Activated naive CD8-positive, alpha-beta T cell treated with anti-CD3 and anti-CD28 coated beads, Interleukin-2, amount 10 ng/mL, durations not matched to agents 7 days and 5 days (primary cell): ENCODE measurements at regions of chr1 and their contacts with region 1.

Region 1: GRCh38 chr1:161071886-161072371 is 2.2 kb upstream of the ARHGAP30 start:
- DNase-seq: peak; percentile 62
- ATAC-seq: no peak
- H3K4me3 Mint-ChIP-seq: no peak overlapping the region
- H3K27ac Mint-ChIP-seq: peak overlapping the region; percentile 74
- H3K4me1 Mint-ChIP-seq: peaks cover 38% of the 10 kb centered on the region
- H3K27me3 Mint-ChIP-seq: no peaks in the 10 kb centered on the region

Region 2: DNA sequence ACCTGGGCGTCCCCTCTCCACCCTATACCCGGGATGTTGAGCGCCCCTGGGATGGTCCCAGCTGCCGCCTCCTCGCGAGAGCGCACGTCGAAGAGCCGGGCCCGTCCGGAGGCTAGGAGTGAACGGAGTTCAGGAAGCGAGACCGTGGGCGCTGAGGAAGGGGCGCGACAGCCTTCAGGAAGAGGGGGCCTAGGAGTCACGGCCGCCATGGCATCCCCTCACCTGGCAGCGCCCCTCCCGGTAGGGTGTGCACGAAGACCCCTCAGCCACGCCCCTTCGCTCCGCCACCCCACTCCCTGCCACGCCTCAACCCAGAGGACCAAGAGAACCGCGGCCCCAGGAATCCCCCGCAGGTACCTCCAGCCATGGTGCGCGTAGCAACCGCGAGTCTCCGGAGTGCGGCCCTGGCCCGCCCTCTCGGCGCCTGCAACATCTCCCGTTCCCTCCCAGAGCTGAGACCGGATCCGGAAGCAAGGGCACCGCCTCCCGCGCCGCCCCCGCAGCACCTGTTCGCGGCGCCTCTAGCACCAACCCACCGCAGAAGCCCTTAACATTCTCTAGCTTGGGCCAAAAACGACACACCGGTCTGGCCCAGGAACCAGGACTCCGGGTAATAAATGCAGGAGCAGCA is 33.3 kb before region 1 on chr1 and contains the start of gene TSTD1:
- POLR2A ChIA-PET with region 1: interaction called, 159 read pairs
- DNase-seq: peak; percentile 88
- ATAC-seq: peak; percentile 88
- H3K4me3 Mint-ChIP-seq: peak within 1 kb of the TSS; percentile 93
- H3K27ac Mint-ChIP-seq: peak within 1 kb of the TSS; percentile 90
- H3K4me1 Mint-ChIP-seq: peaks cover 32% of the 10 kb centered on the region
- H3K27me3 Mint-ChIP-seq: no peaks in the 10 kb centered on the region
- total RNA-seq, gene TSTD1: 81.7 to 84.9 TPM

Region 3: DNA sequence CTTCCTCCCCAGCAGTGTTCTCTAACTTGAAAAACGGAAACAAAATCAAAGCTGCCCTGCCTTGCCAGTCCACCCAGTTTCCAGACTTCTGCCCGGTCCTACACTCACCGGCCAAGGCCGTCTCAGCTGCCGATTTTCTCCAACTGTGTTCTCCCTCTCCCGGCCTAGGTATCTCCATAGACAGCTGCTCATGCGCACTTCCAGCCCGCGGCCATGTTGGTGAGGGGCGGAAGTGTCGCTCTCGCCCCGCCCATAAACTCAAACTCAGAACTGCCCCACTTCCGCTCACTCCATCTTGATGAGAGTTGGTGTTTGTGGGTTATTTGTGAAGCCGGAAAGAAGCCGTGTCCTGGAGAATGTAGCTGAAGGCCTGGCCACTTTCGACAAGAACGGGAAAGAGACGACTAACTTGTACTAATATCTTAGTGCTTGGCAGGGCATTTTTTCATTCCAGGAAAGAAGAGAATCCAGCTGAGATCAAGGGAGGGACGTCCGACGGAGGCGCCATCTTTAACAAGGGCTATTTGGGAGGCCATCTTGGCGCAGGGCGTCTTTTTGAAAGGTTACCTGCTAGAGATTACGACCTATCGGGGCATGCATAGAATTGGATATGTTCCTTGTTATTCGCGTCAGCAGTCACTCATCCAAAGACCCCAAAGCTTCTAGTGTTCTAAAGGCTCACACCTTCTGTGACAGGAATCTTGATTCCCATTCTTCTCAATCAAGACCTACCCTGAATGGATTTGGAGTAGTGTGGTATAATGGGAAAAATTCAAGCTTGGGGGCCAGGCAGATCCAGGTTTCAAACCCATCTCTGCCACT is 26.0 kb before region 1 on chr1 and contains the start of gene USF1:
- POLR2A ChIA-PET with region 1: interaction called, 159 read pairs
- DNase-seq: peak; percentile 93
- ATAC-seq: peak; percentile 73
- H3K4me3 Mint-ChIP-seq: peak within 1 kb of the TSS; percentile 93
- H3K27ac Mint-ChIP-seq: peak within 1 kb of the TSS; percentile 99
- H3K4me1 Mint-ChIP-seq: peaks cover 36% of the 10 kb centered on the region
- H3K27me3 Mint-ChIP-seq: no peaks in the 10 kb centered on the region
- total RNA-seq, gene USF1: 93.0 to 96.3 TPM

Region 4: GRCh38 chr1:161098210-161099068 is 26.5 kb after region 1 on chr1 and contains the start of gene KLHDC9:
- POLR2A ChIA-PET with region 1: interaction called, 118 read pairs
- DNase-seq: peak; percentile 82
- ATAC-seq: peak; percentile 84
- H3K4me3 Mint-ChIP-seq: peak within 1 kb of the TSS; percentile 94
- H3K27ac Mint-ChIP-seq: peak within 1 kb of the TSS; percentile 90
- H3K4me1 Mint-ChIP-seq: peaks cover 21% of the 10 kb centered on the region
- H3K27me3 Mint-ChIP-seq: no peaks in the 10 kb centered on the region
- total RNA-seq, gene KLHDC9: 1.2 TPM

Region 5: DNA sequence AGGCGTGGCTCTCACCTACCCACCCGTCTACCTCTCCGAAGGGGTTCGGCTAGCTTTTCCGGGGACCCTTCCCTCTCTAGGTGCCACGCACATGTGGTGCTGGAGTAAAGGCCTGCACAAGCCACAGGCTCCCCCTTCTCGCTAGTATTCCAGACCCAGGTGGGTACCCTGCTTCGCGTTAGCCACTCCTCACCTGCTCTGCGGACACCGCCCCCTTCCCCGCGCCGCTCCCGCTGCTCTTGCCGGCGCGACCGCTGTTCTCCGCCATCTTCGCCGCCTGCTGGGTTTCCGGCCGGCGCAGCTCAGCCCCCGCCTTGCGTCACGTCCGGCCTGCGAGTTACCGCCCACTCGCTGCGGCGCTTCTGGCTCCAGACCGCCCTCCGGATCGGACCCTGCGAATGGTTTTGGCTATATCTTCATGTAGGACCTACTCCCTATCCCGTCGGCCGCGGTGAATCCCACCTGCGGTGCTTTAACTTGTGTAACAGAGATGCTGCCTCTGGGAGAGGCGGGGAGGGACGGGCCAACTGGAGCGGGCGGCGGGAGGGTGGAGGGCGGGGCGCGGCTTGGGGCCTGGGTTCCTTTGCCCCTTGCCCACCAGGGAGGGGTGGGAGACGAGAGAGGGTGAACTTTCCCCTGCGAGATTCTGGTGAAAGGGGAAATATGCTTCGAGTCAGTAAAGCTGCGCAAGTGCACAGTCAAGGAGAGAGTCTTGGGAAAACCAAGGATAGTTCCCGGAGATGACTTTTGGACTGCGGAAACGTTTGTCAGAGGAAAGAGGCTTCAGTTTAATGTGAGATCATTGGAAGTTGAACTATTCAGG is 46.0 kb after region 1 on chr1 and contains the starts of genes NIT1 and PFDN2:
- POLR2A ChIA-PET with region 1: interaction called, 16 read pairs
- DNase-seq: peak; percentile 90
- ATAC-seq: peak; percentile 80
- H3K4me3 Mint-ChIP-seq: peak within 1 kb of the TSS; percentile 94
- H3K27ac Mint-ChIP-seq: peak within 1 kb of the TSS; percentile 89
- H3K4me1 Mint-ChIP-seq: peaks cover 45% of the 10 kb centered on the region
- H3K27me3 Mint-ChIP-seq: no peaks in the 10 kb centered on the region
- total RNA-seq, gene NIT1: 44.7 to 49.3 TPM
- total RNA-seq, gene PFDN2: 54.1 to 62.3 TPM

Region 6: DNA sequence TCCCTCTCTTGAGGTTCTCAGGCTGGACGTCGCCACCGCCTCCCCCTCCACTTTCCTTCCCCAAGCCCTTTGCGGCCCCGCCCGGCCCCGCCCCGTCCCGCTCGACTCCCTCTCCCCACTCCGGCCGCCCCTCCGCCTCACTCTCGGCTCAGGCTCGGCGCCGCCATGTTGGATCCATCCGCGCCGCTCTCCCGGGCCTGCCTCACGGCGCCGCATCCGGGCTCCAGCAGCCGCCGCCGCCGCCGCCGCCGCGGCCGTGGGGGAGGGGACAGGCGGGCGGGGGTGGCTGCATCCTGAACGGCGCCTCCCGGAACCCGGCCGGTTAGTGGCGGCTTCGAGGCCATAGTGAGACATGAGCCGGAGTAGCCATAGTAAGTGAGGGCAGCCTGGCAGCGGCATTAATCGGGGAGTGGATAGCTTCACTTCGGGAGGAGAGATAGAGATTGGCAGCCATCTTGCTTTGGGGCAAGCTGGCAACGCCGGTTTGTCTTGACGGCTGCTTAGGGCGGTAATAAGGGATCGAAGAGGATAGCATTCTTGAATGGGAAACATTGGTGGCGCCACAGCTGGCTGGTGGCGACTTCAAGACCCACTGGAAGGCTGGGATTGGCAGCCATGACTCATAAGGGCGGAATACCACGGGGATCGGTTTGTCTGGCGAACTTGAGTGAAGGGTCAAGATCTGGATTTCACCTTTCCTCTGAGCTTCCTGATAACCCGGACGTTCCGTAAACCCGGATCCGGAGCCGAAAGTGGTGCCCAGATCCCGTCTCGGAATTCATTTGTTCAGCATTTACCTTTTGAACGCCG is 60.7 kb after region 1 on chr1 and contains the start of gene DEDD:
- POLR2A ChIA-PET with region 1: interaction called, 11 read pairs
- DNase-seq: peak; percentile 92
- ATAC-seq: peak; percentile 98
- H3K4me3 Mint-ChIP-seq: no peak within 1 kb of the TSS
- H3K27ac Mint-ChIP-seq: no peak within 1 kb of the TSS
- H3K4me1 Mint-ChIP-seq: peaks cover 35% of the 10 kb centered on the region
- H3K27me3 Mint-ChIP-seq: no peaks in the 10 kb centered on the region
- total RNA-seq, gene DEDD: 39.8 to 40.3 TPM

Region 7: GRCh38 chr1:161165742-161166668 is 94.1 kb after region 1 on chr1 and contains the start of gene PPOX:
- POLR2A ChIA-PET with region 1: interaction called, 14 read pairs
- DNase-seq: peak; percentile 87
- ATAC-seq: peak; percentile 95
- H3K4me3 Mint-ChIP-seq: peak within 1 kb of the TSS; percentile 92
- H3K27ac Mint-ChIP-seq: peak within 1 kb of the TSS; percentile 97
- H3K4me1 Mint-ChIP-seq: peaks cover 30% of the 10 kb centered on the region
- H3K27me3 Mint-ChIP-seq: no peaks in the 10 kb centered on the region
- total RNA-seq, gene PPOX: 47.0 to 53.0 TPM

Region 8: GRCh38 chr1:161201828-161202725 is 130.1 kb after region 1 on chr1 and contains the start of gene NDUFS2:
- POLR2A ChIA-PET with region 1: no interaction called
- DNase-seq: peak; percentile 86
- ATAC-seq: peak; percentile 99
- H3K4me3 Mint-ChIP-seq: peak within 1 kb of the TSS; percentile 96
- H3K27ac Mint-ChIP-seq: peak within 1 kb of the TSS; percentile 97
- H3K4me1 Mint-ChIP-seq: peaks cover 61% of the 10 kb centered on the region
- H3K27me3 Mint-ChIP-seq: no peaks in the 10 kb centered on the region
- total RNA-seq, gene NDUFS2: 80.6 to 92.8 TPM

Region 9: DNA sequence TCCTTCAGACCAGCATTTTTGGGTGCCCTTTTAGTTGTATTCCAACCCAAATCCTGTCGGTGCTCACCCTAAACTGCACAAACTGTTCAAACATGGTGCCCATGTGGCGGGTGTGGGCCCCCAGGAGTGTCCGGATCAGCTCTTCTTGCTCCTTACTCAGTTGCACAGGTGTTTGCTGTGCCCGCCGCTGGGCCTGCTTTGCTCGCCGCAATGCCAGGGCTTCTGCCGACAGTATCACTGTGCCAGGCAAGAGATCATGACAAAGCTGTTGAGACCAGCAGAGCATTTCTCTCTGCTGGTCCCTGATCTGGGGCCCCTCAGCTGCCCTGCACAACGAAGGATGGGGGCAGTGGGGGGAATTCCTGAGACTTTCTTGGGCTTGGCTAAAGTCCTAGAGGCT is 161.2 kb after region 1 on chr1:
- POLR2A ChIA-PET with region 1: no interaction called
- DNase-seq: no peak
- ATAC-seq: no peak
- H3K4me3 Mint-ChIP-seq: no peak overlapping the region
- H3K27ac Mint-ChIP-seq: no peak overlapping the region
- H3K4me1 Mint-ChIP-seq: peaks cover 3% of the 10 kb centered on the region
- H3K27me3 Mint-ChIP-seq: no peaks in the 10 kb centered on the region